Endothelial cell of umbilical vein (primary cell): ENCODE measurements at regions of chr2 and their contacts with region 1.

Region 1: GRCh38 chr2:152421521-152422370 is 86.8 kb downstream of the FMNL2 start:
- DNase-seq: peak; percentile 94
- H3K4me3 ChIP-seq: peak overlapping the region in 1 of 3 experiments; percentile 5
- H3K27ac ChIP-seq: peak overlapping the region; percentile 84
- H3K4me1 ChIP-seq: peaks cover 21% of the 10 kb centered on the region
- H3K27me3 ChIP-seq: no peaks in the 10 kb centered on the region
- CTCF ChIP-seq: no peak
- POLR2A ChIP-seq: peak; percentile 16

Region 2: DNA sequence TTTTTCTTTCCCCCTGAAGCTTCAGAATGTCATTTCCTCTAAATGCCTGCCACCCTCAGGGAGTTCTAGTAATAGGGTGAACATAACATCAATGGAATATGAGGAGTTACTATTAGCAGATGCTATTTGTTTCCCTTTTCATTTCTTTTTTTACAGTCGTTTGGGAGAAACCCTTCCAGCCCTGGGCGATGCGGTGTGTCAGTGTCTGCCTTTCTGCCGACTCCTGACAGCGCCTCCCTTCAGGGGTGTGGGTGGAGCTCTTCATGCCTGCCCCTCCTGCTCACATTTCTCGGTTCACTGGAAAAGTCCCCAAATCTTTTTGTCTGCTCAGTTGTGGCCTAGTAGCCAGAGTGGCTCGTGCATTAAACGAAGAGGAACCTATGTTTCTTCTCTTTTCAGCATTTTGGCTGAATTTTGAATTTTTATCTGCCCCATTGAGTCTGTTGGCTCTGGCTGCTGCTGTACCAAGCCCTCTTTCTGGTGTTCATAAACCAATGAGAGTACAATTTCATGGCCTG is 14.5 kb before region 1 on chr2:
- CTCF ChIA-PET with region 1: interaction called, 31 read pairs
- POLR2A ChIA-PET with region 1: no interaction called
- dilution Hi-C with region 1: no loop called
- intact Hi-C with region 1: loop called (anchors 1 kb)
- DNase-seq: no peak
- H3K4me3 ChIP-seq: no peak overlapping the region
- H3K27ac ChIP-seq: peak overlapping the region; percentile 19
- H3K4me1 ChIP-seq: peaks cover 57% of the 10 kb centered on the region
- H3K27me3 ChIP-seq: no peaks in the 10 kb centered on the region
- CTCF ChIP-seq: no peak
- POLR2A ChIP-seq: no peak

Region 3: DNA sequence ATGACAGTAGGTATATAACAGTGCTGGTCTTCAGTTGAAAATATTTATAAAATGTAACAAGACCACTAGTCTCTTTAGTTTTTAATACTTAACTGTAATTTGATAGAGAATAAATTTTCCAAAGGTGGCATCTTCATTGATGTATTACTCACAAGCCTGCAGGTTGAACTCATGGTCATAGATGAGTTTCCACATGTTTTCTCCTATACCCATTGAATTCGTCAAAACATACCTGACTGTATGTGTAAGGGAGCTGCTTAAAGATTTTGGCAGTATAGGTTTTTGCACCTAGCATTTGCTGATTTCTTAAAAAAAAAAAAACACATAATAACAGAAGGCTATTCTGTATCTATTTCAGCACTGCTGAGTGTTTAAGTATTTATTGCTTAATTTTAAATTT is 26.2 kb after region 1 on chr2:
- CTCF ChIA-PET with region 1: interaction called, 3 read pairs
- POLR2A ChIA-PET with region 1: no interaction called
- dilution Hi-C with region 1: no loop called
- intact Hi-C with region 1: loop called (anchors 1 kb)
- DNase-seq: no peak
- H3K4me3 ChIP-seq: no peak overlapping the region
- H3K27ac ChIP-seq: no peak overlapping the region
- H3K4me1 ChIP-seq: peaks cover 22% of the 10 kb centered on the region
- H3K27me3 ChIP-seq: no peaks in the 10 kb centered on the region
- CTCF ChIP-seq: no peak
- POLR2A ChIP-seq: no peak

Region 4: DNA sequence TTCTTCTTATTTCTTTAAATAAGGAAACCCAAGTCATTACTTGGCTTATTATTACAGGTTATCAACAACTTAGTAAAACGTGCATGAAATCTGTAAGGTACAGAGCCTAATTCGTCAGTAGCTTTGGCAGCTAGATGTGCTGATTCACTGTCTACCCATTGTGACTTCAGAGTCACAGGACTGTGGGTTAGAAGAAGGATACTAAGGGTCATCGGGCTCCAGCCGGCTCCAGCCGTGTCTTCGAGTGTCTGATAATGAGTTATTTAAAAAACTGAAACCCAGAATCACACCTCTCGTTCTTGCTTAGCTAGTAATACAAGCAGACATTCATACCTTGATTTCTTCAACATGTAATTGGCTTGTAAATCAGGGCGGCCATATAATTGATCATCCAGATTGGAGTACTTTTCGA is 83.8 kb after region 1 on chr2:
- CTCF ChIA-PET with region 1: no interaction called
- POLR2A ChIA-PET with region 1: no interaction called
- dilution Hi-C with region 1: no loop called
- intact Hi-C with region 1: loop called (anchors 5 kb)
- DNase-seq: peak; percentile 82
- H3K4me3 ChIP-seq: no peak overlapping the region
- H3K27ac ChIP-seq: peak overlapping the region; percentile 41
- H3K4me1 ChIP-seq: peaks cover 36% of the 10 kb centered on the region
- H3K27me3 ChIP-seq: no peaks in the 10 kb centered on the region
- CTCF ChIP-seq: no peak
- POLR2A ChIP-seq: no peak

Region 5: DNA sequence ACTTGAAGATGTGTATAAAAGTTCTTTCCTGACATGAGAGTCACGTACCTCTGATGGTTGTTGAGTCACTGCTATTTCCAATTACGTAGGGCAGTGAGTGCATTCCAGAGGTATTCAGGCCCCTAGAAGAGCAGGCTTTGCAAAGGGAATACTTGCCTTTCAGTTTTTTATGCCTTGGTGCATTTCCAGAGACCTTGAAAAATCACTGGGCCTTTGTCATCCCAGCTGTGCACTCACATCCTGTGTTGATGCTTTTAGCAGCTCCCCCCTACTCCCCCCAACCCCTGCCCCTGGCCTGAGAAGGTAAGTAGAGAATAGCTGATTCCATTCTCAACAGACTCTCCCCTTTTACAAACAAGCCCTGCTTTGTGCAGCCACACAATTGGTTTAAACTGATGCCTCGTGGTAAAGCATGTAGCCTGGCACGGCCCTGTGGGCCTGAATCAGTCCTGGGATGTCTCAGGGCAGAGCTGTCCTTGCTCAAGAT is 121.3 kb after region 1 on chr2:
- CTCF ChIA-PET with region 1: no interaction called
- POLR2A ChIA-PET with region 1: no interaction called
- dilution Hi-C with region 1: no loop called
- intact Hi-C with region 1: loop called (anchors 1 kb)
- DNase-seq: peak; percentile 93
- H3K4me3 ChIP-seq: no peak overlapping the region
- H3K27ac ChIP-seq: peak overlapping the region; percentile 89
- H3K4me1 ChIP-seq: peaks cover 26% of the 10 kb centered on the region
- H3K27me3 ChIP-seq: no peaks in the 10 kb centered on the region
- CTCF ChIP-seq: no peak
- POLR2A ChIP-seq: no peak